ENCODE measurements at regions of chr4 and their contacts with region 1.

Region 1: GRCh38 chr4:148335133-148335532 is 107.1 kb downstream of the NR3C2 start:
- DNase-seq: no peak
- H3K4me3 ChIP-seq: no peak overlapping the region
- H3K27ac ChIP-seq: no peak overlapping the region
- H3K4me1 ChIP-seq: no peaks in the 10 kb centered on the region
- H3K27me3 ChIP-seq: no peaks in the 10 kb centered on the region
- CTCF ChIP-seq: no peak

Region 2: GRCh38 chr4:148355442-148356123 is 20.4 kb after region 1 on chr4:
- CTCF ChIA-PET with region 1: no interaction called
- POLR2A ChIA-PET with region 1: no interaction called
- intact Hi-C with region 1: no loop called
- DNase-seq: no peak
- H3K4me3 ChIP-seq: no peak overlapping the region
- H3K27ac ChIP-seq: no peak overlapping the region
- H3K4me1 ChIP-seq: no peaks in the 10 kb centered on the region
- H3K27me3 ChIP-seq: no peaks in the 10 kb centered on the region
- CTCF ChIP-seq: no peak

Region 3: DNA sequence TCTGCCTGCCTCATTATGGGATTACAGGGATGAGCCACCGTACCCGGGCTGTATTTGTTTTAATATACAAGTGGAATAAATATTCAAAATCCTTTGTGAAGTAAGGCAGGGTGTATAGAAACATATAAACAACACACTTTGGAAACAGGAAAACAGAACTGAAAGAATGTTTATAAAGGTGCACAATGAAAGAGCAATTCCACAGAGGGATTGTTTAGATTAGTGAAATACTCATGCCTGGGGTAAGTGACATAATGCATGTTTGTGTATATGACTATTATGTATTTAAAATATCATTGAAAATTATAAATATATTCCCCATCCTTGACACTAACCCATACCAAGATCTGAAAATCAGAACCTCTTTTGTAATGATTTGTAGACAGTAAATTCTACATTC is 152.0 kb after region 1 on chr4:
- CTCF ChIA-PET with region 1: no interaction called
- POLR2A ChIA-PET with region 1: no interaction called
- intact Hi-C with region 1: loop called (anchors 5 kb)
- DNase-seq: no peak
- H3K4me3 ChIP-seq: no peak overlapping the region
- H3K27ac ChIP-seq: no peak overlapping the region
- H3K4me1 ChIP-seq: no peaks in the 10 kb centered on the region
- H3K27me3 ChIP-seq: no peaks in the 10 kb centered on the region
- CTCF ChIP-seq: no peak

Region 4: GRCh38 chr4:148795156-148795864 is 460.2 kb after region 1 on chr4:
- CTCF ChIA-PET with region 1: no interaction called
- POLR2A ChIA-PET with region 1: no interaction called
- intact Hi-C with region 1: no loop called
- DNase-seq: peak; percentile 53 to 59
- H3K4me3 ChIP-seq: no peak overlapping the region
- H3K27ac ChIP-seq: no peak overlapping the region
- H3K4me1 ChIP-seq: peaks cover 12% of the 10 kb centered on the region
- H3K27me3 ChIP-seq: no peaks in the 10 kb centered on the region
- CTCF ChIP-seq: no peak

Measured in PC-9 (cell line).